ENCODE measurements at regions of chr14 and their contacts with region 1.

Region 1: GRCh38 chr14:51239813-51240803 is at the start of gene TMX1:
- DNase-seq: peak; percentile 70 to 88 (median 82)
- ATAC-seq: peak; percentile 94
- H3K4me3 ChIP-seq: peak within 1 kb of the TSS; percentile 99
- H3K4me3 Mint-ChIP-seq: no peak within 1 kb of the TSS
- H3K27ac ChIP-seq: peak within 1 kb of the TSS; percentile 81
- H3K27ac Mint-ChIP-seq: no peak within 1 kb of the TSS
- H3K4me1 ChIP-seq: peaks cover 16 to 17% of the 10 kb centered on the region in 2 donors
- H3K4me1 Mint-ChIP-seq: peaks cover 0 to 29% (median 20%) of the 10 kb centered on the region in 7 donors
- H3K27me3 ChIP-seq: no peaks in the 10 kb centered on the region
- H3K27me3 Mint-ChIP-seq: no peaks in the 10 kb centered on the region
- total RNA-seq, gene TMX1: 13.3 to 48.3 (median 23.1) TPM

Region 2: DNA sequence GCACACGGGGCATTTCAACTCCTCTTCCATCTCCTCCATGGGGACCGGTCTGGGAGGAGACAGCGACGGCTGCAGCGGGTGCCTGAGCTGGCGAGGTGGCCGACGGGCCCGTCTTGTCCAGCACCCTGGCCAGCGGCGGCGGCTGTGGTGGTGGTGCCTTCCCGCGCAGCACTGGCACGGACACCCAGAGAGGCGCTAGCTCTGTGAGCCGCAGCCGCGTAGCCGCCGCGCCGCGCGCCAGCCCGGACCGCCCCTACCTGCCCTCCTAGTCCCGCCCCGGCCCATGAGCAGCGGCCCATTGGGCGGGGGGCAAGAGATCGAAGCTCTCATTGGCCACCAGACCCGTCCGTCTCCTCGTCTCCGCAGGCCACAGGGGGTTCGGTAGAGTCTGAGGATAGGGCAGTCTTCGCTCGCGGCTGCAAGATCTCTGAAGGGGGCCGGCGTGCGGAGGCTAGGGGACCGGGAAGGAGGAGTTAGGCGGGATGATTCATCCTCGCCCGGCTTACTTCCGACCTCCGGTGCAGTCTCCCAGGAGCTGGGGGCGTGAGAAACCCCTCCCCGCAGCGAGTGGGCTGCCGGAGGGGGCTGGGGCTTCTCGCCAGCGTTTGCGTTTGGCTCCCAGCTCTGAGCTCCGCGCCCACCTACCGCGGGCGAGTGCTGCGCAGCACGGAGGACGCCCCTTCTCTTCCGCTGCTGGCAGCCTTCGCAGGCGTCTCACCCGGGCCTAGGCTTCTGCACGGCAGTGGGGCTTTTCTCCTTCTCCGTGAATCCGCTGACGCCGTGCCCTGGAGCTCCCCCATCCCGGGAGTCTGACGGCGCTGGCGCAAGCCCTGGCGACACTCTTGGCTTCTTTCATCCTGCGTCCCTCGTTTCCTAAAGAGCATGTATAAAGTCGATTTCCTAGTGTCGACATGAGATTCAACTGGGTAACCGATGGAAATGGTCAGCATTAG is 144.9 kb before region 1 on chr14 and contains the start of gene TRIM9:
- CTCF ChIA-PET with region 1: no interaction called
- POLR2A ChIA-PET with region 1: interaction called, 9 read pairs
- intact Hi-C with region 1: loop called (anchors 1 kb)
- DNase-seq: peak; percentile 77 to 93 (median 91)
- ATAC-seq: peak; percentile 96
- H3K4me3 ChIP-seq: peak within 1 kb of the TSS; percentile 83
- H3K4me3 Mint-ChIP-seq: peak within 1 kb of the TSS; percentile 89 to 98 (median 95)
- H3K27ac ChIP-seq: peak within 1 kb of the TSS; percentile 58
- H3K27ac Mint-ChIP-seq: peak within 1 kb of the TSS; percentile 9 to 93 (median 87)
- H3K4me1 ChIP-seq: peaks cover 3 to 8% of the 10 kb centered on the region in 2 donors
- H3K4me1 Mint-ChIP-seq: peaks cover 4 to 18% (median 9%) of the 10 kb centered on the region in 7 donors
- H3K27me3 ChIP-seq: peaks cover 0 to 3% of the 10 kb centered on the region in 2 donors
- H3K27me3 Mint-ChIP-seq: peaks cover 12 to 70% (median 17%) of the 10 kb centered on the region in 5 donors
- total RNA-seq, gene TRIM9: 0.27 to 1.7 (median 0.39) TPM

Measured in naive thymus-derived CD4-positive, alpha-beta T cell (primary cell).